K562 (cell line): ENCODE measurements at regions of chr1 and their contacts with region 1.

Region 1: DNA sequence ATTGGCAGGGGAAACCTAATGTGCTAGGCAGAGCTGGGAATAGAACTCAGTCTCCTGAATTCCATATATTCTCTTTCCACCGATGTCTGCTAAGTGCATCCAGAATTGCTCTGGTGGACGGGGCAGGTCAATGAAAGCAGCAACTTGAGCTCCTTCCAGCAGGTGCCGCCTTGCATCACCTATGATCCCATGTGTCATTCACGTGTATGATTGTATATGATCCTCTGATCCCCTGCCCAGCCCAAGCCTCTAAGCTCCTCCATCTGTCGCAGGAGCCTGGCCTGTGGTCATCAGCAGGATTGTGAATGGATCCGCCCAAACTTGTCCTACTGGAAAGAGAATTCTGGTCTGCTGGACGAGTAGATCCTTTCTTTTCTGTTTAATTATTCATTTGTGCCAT is 13.1 kb downstream of the ACTA1 start:
- DNase-seq: peak in 3 of 4 experiments; percentile 47 to 49 (median 49)
- ATAC-seq: peak; percentile 96
- H3K4me3 ChIP-seq: no peak overlapping the region
- H3K27ac ChIP-seq: no peak overlapping the region
- H3K4me1 ChIP-seq: no peaks in the 10 kb centered on the region; a peak in 1 of 5 replicates
- H3K27me3 ChIP-seq: peaks cover 26 to 27% of the 10 kb centered on the region in 2 experiments
- CTCF ChIP-seq: peak; percentile 43 to 55 (median 52)
- EP300 ChIP-seq: no peak
- POLR2A ChIP-seq: no peak
- RAD21 ChIP-seq: peak in 1 of 2 experiments; percentile 59; a peak in 2 of 4 replicates

Region 2: GRCh38 chr1:229296541-229296941 is 124.2 kb before region 1 on chr1:
- CTCF ChIA-PET with region 1: no interaction called
- POLR2A ChIA-PET with region 1: no interaction called
- in situ Hi-C with region 1: no loop called
- intact Hi-C with region 1: no loop called
- DNase-seq: no peak
- ATAC-seq: no peak
- H3K4me3 ChIP-seq: no peak overlapping the region
- H3K27ac ChIP-seq: no peak overlapping the region
- H3K4me1 ChIP-seq: no peaks in the 10 kb centered on the region
- H3K27me3 ChIP-seq: no peaks in the 10 kb centered on the region
- CTCF ChIP-seq: no peak
- EP300 ChIP-seq: no peak
- POLR2A ChIP-seq: no peak
- RAD21 ChIP-seq: no peak

Region 3: DNA sequence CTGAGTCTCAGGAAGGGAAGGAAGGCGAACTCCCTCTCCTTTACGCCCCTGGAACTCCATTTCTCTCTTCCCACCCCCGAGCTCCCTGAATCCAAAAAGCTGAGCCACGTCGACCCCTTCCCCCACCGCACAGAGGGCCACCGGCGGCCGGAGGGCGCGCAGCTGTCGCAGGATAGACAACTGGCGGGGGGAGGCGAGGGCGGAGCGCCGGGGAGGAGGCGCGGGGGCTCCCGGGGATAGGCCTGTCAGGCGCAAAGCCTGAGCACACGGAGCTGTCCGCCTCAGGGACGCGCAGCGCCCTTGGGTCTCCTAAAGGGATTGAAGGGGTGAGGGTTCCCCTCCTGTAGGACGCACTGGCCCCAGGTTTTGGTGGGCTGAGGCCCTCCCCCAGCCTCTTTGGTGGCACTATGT is 13.9 kb after region 1 on chr1:
- CTCF ChIA-PET with region 1: no interaction called
- POLR2A ChIA-PET with region 1: interaction called, 4 read pairs
- in situ Hi-C with region 1: no loop called
- intact Hi-C with region 1: loop called (anchors 2 kb)
- DNase-seq: peak in 1 of 4 experiments; percentile 39
- ATAC-seq: no peak
- H3K4me3 ChIP-seq: no peak overlapping the region
- H3K27ac ChIP-seq: no peak overlapping the region
- H3K4me1 ChIP-seq: peaks cover 0 to 24% of the 10 kb centered on the region in 2 experiments; a peak in 2 of 5 replicates
- H3K27me3 ChIP-seq: peaks cover 11 to 33% of the 10 kb centered on the region in 2 experiments; a peak in 4 of 5 replicates
- CTCF ChIP-seq: no peak
- EP300 ChIP-seq: no peak
- POLR2A ChIP-seq: no peak
- RAD21 ChIP-seq: no peak